Heart right ventricle (tissue), 16 donors: ENCODE measurements at regions of chr16 and their contacts with region 1.

Region 1: GRCh38 chr16:57329718-57330327 is 28.8 kb upstream of the CCL22 start:
- DNase-seq: no peak
- ATAC-seq: no peak
- H3K4me3 ChIP-seq: no peak overlapping the region
- H3K27ac ChIP-seq: no peak overlapping the region
- H3K4me1 ChIP-seq: peaks cover 0 to 3% (median 0%) of the 10 kb centered on the region in 9 donors
- H3K27me3 ChIP-seq: peaks cover 0 to 6% (median 0%) of the 10 kb centered on the region in 7 donors
- CTCF ChIP-seq: no peak

Region 2: DNA sequence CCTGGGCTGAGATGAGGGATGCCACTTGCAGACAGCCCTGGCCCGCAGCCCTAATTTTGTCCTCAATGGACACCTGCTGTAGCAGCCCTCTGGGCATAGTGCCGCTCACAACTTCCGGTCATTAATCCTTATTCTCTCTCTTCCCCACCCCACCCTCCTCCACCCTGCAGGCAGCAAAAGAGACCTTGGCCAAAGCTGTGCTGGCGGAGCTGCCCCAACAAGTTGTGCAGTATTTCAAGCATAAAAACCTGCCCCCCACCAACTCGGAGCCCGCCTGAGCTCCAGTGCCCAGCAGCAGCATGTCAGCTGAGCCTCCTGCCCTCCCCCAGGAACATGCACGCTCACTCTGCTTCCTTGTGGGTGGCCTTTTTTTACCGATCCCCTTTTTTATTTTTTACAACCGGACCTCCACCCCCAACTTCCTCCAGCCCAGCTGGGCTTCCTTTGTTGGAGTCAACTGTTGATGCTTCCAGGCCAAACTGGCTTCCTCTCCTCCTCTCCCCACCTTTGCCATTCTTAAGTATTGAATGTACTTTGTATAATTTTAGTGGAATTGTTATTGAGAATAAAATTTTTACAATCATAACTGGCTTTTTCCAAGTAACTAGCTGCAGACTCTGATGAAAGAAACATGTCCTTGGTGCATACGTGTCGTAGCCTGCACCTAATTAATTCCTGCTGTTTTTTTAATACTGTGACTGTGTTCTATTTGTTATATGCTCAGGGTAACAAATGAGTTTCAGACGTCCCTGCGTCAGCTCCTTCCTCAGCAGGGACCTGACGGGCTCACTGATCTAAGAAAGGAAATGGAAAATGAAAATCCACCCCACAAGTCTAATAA is 182.2 kb before region 1 on chr16:
- intact Hi-C with region 1: no loop called
- DNase-seq: peak in 1 of 2 donors; percentile 61
- ATAC-seq: peak in 7 of 8 donors; percentile 19 to 69 (median 64)
- H3K4me3 ChIP-seq: peak overlapping the region in 2 of 10 donors; percentile 7 to 19
- H3K27ac ChIP-seq: peak overlapping the region in 9 of 10 donors; percentile 66 to 85 (median 78)
- H3K4me1 ChIP-seq: peaks cover 14 to 94% (median 68%) of the 10 kb centered on the region in 9 donors
- H3K27me3 ChIP-seq: no peaks in the 10 kb centered on the region
- CTCF ChIP-seq: no peak

Region 3: DNA sequence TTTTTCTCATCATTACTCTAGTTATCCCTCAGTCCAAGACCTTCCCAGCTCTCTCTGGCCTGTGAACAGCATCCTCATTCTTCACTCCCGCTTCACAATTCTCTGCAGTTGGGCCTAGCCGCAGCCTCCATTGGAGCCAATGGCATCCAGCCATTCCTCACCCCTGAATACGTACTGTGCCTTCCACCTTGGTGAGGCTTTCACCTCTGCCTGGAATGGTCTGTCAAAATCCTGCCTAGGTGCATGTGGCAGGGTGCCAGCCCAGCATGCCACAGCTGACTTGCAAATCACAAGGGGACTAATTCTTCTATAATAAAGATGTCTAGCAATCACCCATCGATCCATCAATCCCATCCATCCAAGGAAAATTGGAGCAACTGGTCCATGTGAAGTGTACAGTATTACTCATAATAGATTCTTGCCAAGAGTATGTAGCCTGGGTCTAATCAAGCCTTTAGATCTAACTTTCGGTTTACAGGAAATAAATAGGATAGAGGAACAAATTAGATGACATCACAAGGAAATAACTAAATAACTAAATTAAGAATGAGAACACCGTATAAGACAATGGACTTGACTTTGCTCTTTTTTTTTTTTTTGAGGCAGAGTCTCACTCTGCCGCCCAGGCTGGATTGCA is 37.4 kb after region 1 on chr16:
- intact Hi-C with region 1: loop called in 2 of 10 experiments (anchors 2 to 5 kb)
- DNase-seq: no peak
- ATAC-seq: peak; percentile 41 to 73 (median 64)
- H3K4me3 ChIP-seq: no peak overlapping the region
- H3K27ac ChIP-seq: peak overlapping the region in 9 of 10 donors; percentile 25 to 80 (median 46)
- H3K4me1 ChIP-seq: peaks cover 0 to 33% (median 24%) of the 10 kb centered on the region in 9 donors
- H3K27me3 ChIP-seq: no peaks in the 10 kb centered on the region
- CTCF ChIP-seq: no peak